Ovary (tissue), 10 donors: ENCODE measurements at regions of chr5 and their contacts with region 1.

Region 1: DNA sequence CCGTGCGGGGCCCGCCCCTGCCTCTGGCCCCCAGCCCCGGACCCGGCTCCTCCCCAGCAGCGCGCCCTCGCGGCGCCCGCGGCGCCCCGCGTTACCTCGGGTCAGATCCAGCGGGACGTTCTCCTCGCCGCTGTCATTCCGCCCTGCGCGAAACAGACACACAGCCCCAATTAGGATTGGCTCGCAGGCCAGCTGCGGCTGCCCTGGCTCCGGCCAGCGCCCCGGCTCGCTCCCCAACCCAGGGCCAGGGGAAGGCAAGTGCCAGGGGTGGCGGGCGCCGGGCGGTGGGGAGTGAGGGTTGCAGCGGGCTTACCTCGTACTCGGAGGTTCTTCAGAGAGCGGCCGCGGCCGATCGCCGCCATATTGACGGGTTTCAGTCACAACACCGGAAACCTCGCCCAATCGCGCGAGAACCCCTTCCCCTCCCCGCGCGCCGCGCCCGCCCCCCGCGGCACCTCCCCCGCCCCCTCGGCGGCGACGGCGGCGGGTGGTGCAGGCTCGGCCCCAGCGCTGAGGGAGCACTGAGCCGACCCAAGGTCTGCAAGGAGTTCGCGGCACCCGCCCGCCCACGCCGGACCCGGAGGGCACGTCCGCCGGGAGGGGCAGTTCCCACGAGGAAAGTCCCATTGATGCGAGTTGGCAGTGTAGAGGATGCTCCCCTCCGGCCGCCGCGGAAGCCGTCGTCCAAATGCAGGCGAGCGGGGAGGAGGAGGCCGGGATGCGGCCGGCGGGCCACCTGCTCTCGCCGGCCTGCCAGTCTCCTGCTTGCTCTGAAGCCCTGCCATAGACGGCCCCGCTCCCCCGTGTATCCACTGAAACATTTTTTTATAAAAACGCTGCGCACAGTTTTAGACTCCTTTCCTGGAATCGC is at the start of gene RICTOR:
- DNase-seq: peak; percentile 90 to 95 (median 94)
- H3K4me3 ChIP-seq: peak within 1 kb of the TSS; percentile 94
- H3K27ac ChIP-seq: peak within 1 kb of the TSS; percentile 98 to 99
- H3K4me1 ChIP-seq: no peaks in the 10 kb centered on the region
- H3K27me3 ChIP-seq: no peaks in the 10 kb centered on the region
- CTCF ChIP-seq: no peak
- EP300 ChIP-seq: no peak
- POLR2A ChIP-seq: peak; percentile 31
- total RNA-seq, gene RICTOR: 36.3 to 55.1 (median 42.7) TPM

Region 2: GRCh38 chr5:39015743-39016586 is 58.3 kb before region 1 on chr5:
- intact Hi-C with region 1: loop called in 1 of 4 experiments (anchors 10 kb)
- DNase-seq: no peak
- H3K4me3 ChIP-seq: no peak overlapping the region
- H3K27ac ChIP-seq: no peak overlapping the region
- H3K4me1 ChIP-seq: no peaks in the 10 kb centered on the region
- H3K27me3 ChIP-seq: no peaks in the 10 kb centered on the region
- CTCF ChIP-seq: no peak
- EP300 ChIP-seq: no peak
- POLR2A ChIP-seq: no peak

Region 3: GRCh38 chr5:39424736-39425637 is 350.7 kb after region 1 on chr5 and contains the start of gene DAB2:
- intact Hi-C with region 1: loop called in 1 of 4 experiments (anchors 10 kb)
- DNase-seq: peak; percentile 78 to 86 (median 80)
- H3K4me3 ChIP-seq: peak within 1 kb of the TSS; percentile 68
- H3K27ac ChIP-seq: peak within 1 kb of the TSS; percentile 37 to 74
- H3K4me1 ChIP-seq: peaks cover 22% of the 10 kb centered on the region
- H3K27me3 ChIP-seq: no peaks in the 10 kb centered on the region
- CTCF ChIP-seq: peak in 2 of 3 donors; percentile 30 to 57
- EP300 ChIP-seq: no peak
- POLR2A ChIP-seq: peak; percentile 25
- total RNA-seq, gene DAB2: 25.0 to 79.0 (median 38.7) TPM